PC-9 (cell line): ENCODE measurements at regions of chr12 and their contacts with region 1.

Region 1: GRCh38 chr12:113196996-113197395 is 11.5 kb downstream of the RITA1 start:
- DNase-seq: peak; percentile 66 to 69
- H3K4me3 ChIP-seq: no peak overlapping the region
- H3K27ac ChIP-seq: no peak overlapping the region
- H3K4me1 ChIP-seq: peaks cover 32% of the 10 kb centered on the region
- H3K27me3 ChIP-seq: no peaks in the 10 kb centered on the region
- CTCF ChIP-seq: peak; percentile 75

Region 2: DNA sequence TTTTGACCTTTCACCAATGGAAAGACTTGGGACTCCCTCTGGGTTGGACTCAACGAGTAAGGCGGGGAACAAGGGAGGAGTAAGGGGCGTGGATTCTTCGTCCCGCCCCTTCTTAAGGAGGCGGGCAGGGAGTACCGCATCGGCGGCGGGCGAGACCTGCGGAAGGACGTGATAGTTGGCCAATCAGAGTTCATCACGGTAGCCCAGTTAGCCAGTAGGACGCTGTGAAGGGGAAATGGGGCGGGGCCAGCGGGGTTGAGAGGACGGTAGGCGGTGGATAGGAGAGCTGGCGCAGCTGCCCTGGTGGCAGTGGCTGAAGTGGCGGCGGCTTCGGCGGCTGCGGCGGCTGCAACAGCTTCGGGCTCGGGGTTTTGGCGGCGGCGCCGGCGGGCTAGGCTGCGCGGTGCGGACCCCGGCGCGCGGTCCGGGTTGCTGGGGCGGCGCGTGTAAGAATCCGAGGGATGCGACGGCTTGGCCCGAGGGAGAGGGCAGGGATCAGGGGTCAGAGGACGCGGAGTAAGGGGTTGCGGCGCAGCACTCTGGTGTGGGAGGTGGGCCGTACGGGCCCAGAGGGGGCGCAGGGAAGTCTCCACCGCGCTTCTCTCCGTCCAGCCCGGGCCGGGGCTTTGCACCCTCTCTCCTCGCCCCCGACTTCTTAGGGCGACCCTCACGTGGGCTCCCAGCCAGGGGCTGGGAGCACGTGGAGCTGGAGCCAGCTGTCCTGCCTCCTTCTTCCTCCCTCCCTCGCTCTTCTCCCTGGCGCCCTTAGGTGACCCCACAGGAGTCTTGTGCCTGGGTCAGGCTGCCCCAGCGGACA is 24.4 kb after region 1 on chr12 and contains the start of gene TPCN1:
- CTCF ChIA-PET with region 1: interaction called, 5 read pairs
- POLR2A ChIA-PET with region 1: no interaction called
- intact Hi-C with region 1: loop called (anchors 2 kb)
- DNase-seq: peak; percentile 99 to 100
- H3K4me3 ChIP-seq: peak within 1 kb of the TSS; percentile 74
- H3K27ac ChIP-seq: peak within 1 kb of the TSS; percentile 82
- H3K4me1 ChIP-seq: peaks cover 44% of the 10 kb centered on the region
- H3K27me3 ChIP-seq: no peaks in the 10 kb centered on the region
- CTCF ChIP-seq: no peak
- total RNA-seq, gene TPCN1: 34.1 and 42.7 TPM in 2 replicates

Region 3: DNA sequence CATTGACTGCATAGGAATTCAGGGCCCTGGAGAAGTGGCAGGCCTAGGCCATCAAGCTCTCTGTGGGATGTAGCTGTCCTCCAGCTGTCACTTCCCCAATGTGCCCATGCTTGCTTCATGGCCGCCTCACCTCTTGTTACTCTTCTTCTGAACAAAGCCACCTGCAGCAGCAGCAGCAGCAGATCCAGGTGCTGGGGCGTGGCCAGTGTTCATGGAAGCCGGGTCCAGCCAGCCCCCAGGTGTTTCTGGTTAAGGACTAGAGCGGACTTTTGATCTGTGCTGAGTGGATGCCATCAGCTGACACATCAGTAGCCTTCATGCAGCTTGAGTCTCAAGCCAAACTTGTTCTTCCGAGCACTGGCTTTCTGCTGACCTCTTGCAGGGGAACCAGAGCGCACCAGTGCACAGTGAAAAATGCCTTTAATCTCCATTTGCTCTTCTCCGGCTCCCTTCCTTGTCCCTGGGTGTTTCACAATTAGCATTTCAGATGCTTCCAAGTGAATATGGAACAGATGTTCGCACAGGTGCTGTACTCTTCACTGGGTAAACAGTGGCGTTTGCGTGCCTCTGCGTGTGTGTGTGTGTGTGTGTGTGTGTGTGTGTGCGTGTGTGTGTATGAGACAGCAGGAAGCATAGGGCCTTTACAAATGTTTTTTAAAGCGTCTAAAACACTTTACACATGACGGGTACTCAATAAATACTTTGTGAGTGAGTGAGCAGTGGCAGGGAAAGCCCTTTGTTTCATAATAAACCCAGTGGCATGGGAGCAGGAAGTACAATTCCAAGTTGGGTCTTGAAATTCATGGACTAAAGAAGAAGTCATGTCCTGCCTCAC is 44.4 kb after region 1 on chr12:
- CTCF ChIA-PET with region 1: interaction called, 3 read pairs
- POLR2A ChIA-PET with region 1: no interaction called
- intact Hi-C with region 1: loop called (anchors 5 kb)
- DNase-seq: peak; percentile 60 to 99
- H3K4me3 ChIP-seq: peak overlapping the region; percentile 36; the same call in 1 of the 2 replicates
- H3K27ac ChIP-seq: peak overlapping the region; percentile 93
- H3K4me1 ChIP-seq: peaks cover 86% of the 10 kb centered on the region
- H3K27me3 ChIP-seq: no peaks in the 10 kb centered on the region
- CTCF ChIP-seq: no peak

Region 4: DNA sequence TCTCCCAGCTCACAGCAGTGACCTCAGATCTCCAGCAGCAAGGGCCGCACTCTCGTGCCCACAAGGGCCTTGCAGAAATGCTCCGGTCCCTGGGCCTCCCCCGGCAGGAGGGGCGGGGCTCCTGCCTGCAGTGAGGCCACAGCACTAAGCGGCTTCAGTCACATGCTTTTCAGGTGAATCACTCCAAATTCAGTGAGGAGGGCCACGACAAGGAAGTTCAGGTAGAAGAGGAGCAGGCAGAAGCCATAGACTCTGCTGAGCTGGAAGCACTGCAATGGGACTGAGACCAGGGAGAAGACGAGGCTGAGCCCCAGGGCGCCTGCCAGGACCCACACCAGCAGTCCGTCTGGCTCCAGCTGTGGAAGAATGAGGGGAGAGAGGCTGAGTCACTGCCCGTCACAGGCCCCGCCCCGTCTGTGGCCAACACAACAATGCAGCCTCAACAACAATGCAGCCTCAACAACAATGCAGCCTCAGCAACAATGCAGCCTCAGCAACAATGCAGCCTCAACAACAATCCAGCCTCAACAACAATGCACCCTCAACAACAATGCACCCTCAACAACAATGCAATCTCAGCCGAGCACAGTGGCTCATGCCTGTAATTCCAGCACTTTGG is 102.7 kb after region 1 on chr12:
- CTCF ChIA-PET with region 1: interaction called, 3 read pairs
- POLR2A ChIA-PET with region 1: no interaction called
- intact Hi-C with region 1: loop called (anchors 2 kb)
- DNase-seq: peak; percentile 87 to 96
- H3K4me3 ChIP-seq: no peak overlapping the region
- H3K27ac ChIP-seq: peak overlapping the region; percentile 62
- H3K4me1 ChIP-seq: peaks cover 19% of the 10 kb centered on the region
- H3K27me3 ChIP-seq: no peaks in the 10 kb centered on the region
- CTCF ChIP-seq: no peak

Region 5: DNA sequence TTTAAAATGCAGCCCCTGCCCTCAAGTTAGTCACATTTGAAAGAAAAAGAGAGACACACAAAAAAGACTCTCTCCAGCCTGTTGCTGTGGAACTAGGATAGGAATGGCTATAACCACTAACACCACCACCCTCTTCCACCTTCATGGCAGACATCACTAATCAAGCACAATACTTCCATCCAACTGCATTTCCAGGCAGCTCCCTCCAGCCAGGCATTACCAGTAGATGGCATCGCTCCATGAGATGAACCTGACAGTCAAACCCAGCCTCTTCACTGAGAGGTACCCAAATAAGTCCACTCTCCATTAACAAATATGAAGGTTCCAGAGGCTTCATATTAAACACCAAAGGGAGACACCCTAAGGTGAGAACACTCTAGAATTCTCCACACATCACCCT is 113.5 kb after region 1 on chr12:
- CTCF ChIA-PET with region 1: interaction called, 5 read pairs
- POLR2A ChIA-PET with region 1: interaction called, 5 read pairs
- intact Hi-C with region 1: loop called (anchors 5 kb)
- DNase-seq: no peak
- H3K4me3 ChIP-seq: no peak overlapping the region
- H3K27ac ChIP-seq: no peak overlapping the region
- H3K4me1 ChIP-seq: no peaks in the 10 kb centered on the region
- H3K27me3 ChIP-seq: no peaks in the 10 kb centered on the region
- CTCF ChIP-seq: peak; percentile 40; the same call in 1 of the 2 replicates

Region 6: DNA sequence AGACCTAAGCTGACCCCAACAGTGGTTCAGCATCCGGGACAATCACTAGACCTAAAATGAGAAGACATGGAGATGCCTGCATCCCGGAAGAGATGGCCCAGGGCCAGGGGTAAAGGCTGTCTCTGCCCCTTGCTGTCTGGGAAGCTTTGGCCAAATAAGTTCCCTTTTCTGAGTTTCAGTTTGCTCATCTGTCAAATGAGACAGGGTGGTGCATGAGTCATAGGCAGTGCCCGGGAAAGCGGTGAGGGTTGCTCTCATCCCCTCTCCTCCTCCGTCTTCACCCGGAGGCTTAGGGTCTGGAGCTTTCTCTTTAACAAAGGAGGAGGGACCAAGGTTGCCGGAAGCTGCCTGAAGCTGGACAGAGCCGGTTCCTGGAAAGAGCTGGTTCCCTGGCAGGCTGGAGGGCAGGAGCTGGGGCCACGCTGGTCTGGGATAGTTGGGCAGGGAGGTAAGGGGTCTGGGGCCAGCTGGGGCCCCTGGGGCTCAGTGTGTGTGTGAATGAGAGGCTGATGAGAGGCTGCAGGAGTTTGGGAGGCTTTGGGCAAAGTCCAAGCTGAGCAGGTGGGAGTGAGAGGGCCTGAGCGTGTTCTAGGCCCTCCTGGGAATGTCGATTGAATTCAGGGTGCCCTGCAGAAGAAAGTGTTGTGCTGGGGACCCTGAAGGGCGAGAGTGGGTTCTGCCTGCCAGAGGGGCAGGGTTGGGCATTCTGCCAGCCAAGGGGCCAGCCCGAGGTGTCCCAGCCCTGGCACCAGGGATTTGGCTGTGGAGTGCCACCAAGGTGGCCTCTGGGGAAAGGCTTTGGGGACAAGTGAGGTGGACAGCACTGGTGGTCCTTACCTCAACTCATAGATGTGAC is 225.3 kb after region 1 on chr12 and contains the start of gene SDSL:
- CTCF ChIA-PET with region 1: interaction called, 6 read pairs
- POLR2A ChIA-PET with region 1: no interaction called
- intact Hi-C with region 1: loop called (anchors 1 kb)
- DNase-seq: peak; percentile 76 to 83
- H3K4me3 ChIP-seq: peak within 1 kb of the TSS; percentile 81
- H3K27ac ChIP-seq: peak within 1 kb of the TSS; percentile 50
- H3K4me1 ChIP-seq: peaks cover 7% of the 10 kb centered on the region; the same call in 1 of the 2 replicates
- H3K27me3 ChIP-seq: no peaks in the 10 kb centered on the region
- CTCF ChIP-seq: no peak
- total RNA-seq, gene SDSL: 14.2 and 26.6 TPM in 2 replicates

Region 7: GRCh38 chr12:113569806-113570205 is 372.8 kb after region 1 on chr12:
- CTCF ChIA-PET with region 1: no interaction called
- POLR2A ChIA-PET with region 1: no interaction called
- intact Hi-C with region 1: no loop called
- DNase-seq: no peak
- H3K4me3 ChIP-seq: no peak overlapping the region
- H3K27ac ChIP-seq: no peak overlapping the region
- H3K4me1 ChIP-seq: no peaks in the 10 kb centered on the region
- H3K27me3 ChIP-seq: peaks cover 5% of the 10 kb centered on the region
- CTCF ChIP-seq: no peak